ENCODE measurements at regions of chr22 and their contacts with region 1.

Region 1: DNA sequence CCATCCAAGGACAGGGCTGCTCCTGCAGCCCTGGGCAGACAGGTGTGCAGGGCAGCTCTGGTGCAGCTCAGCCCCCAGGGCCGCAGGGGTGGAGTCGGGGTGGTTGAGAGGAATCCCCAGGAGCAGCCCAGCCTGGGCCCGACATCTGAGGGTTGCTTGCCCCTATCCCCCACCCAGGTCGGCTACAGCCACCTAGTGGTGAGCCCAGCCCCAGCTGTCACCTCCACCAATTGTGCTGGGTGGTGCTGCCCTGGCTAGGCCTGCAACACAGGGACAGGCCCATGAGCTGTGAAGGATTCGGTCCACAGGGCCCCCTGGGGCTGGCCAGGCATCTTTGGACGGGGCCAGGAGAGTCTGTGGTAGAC is 29.6 kb downstream of the RTN4R start:
- DNase-seq: peak; percentile 82
- H3K4me3 Mint-ChIP-seq: no peak overlapping the region
- H3K27ac Mint-ChIP-seq: no peak overlapping the region
- H3K4me1 Mint-ChIP-seq: no peaks in the 10 kb centered on the region
- H3K27me3 Mint-ChIP-seq: peaks cover 39% of the 10 kb centered on the region
- CTCF ChIP-seq: no peak

Region 2: GRCh38 chr22:20156611-20157429 is 81.7 kb before region 1 on chr22:
- CTCF ChIA-PET with region 1: interaction called, 16 read pairs
- intact Hi-C with region 1: loop called (anchors 5 kb)
- DNase-seq: peak; percentile 90
- H3K4me3 Mint-ChIP-seq: no peak overlapping the region
- H3K27ac Mint-ChIP-seq: no peak overlapping the region
- H3K4me1 Mint-ChIP-seq: no peaks in the 10 kb centered on the region
- H3K27me3 Mint-ChIP-seq: peaks cover 64% of the 10 kb centered on the region
- CTCF ChIP-seq: peak; percentile 99

Region 3: DNA sequence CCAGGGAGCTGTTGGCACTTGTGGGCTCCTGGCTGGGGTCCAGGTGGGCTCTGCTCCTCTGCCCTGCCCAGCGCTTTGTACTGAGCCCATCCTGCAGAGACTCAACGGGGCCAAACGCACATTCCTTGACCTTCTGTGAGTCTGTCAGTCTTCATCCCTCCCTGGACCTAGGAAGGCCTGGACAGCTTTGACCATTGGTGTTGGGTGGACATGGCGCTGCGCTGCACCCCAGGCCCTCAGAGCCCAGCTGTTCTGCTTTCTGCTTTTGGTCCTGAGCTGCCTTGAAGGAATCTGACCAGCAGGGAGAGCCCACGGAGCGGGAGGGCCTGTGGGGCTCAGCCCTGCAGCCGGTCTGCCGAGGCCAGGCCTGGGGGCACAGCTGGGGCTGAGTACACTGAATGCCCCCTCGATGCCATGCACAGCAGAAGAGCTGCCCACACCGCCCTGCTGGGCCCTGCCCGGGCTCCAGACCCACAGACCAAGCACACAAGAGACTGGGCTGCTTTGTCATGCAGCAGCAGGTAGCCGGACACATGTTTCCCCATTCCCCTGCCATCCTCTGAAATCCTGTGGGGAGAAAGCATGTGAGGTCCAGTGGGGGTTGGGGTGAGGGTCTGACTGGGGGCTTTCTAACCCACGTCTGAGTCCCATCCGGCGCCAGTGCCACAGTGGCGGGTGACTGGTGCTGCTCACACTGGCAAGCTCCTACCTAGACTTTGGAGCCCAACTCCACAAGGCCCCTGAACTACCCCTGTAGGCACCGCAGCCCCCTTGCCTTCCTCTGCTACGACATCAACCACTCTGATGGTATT is 63.5 kb before region 1 on chr22:
- CTCF ChIA-PET with region 1: interaction called, 37 read pairs
- intact Hi-C with region 1: loop called (anchors 1 kb)
- DNase-seq: peak; percentile 55
- H3K4me3 Mint-ChIP-seq: no peak overlapping the region
- H3K27ac Mint-ChIP-seq: no peak overlapping the region
- H3K4me1 Mint-ChIP-seq: no peaks in the 10 kb centered on the region
- H3K27me3 Mint-ChIP-seq: peaks cover 75% of the 10 kb centered on the region
- CTCF ChIP-seq: peak; percentile 47

Region 4: DNA sequence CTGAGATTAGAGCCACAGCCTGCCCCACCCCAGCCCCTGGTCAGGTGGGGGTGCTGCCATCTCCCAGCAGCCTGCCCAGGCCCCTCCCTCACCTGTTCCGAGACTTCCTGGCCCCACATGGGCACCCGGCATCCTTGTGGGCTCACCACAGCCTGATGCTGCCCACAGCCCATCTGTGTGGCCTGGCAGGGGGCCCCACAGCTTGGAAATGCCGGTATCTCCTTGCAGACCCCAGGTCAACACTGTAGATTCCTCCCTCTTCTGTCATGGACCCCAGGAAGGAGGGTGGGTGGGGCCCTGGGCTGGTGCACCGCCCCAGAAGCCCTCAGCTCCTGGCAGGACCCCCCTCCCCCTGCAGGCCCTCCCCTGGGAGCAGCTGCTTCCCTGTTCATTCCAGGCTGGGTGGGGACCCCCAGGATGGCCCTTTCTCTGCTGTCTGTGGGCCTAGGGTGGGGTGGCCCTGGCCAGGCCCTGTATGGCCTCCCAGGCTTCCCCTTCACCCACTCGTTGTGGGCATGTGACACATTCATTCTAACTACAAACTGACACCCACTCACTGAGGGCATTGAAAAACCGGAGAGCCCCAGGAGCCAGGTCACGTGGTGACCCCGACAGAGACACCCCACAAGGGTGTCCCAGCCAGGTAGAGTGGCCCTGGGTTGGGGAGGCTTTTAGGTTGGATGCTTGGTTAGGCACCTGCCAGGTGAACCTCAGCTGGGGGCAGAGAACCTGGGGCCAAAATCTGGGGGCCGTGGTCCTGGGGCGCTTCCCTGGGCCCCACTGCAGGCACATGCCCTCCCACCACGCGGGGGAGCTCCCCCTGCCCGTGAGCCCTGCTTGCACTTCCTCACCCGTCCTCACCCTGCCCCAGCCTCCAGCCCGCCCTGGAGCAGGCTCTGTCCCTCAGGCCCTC is 43.6 kb before region 1 on chr22:
- CTCF ChIA-PET with region 1: no interaction called
- intact Hi-C with region 1: no loop called
- DNase-seq: no peak
- H3K4me3 Mint-ChIP-seq: no peak overlapping the region
- H3K27ac Mint-ChIP-seq: no peak overlapping the region
- H3K4me1 Mint-ChIP-seq: no peaks in the 10 kb centered on the region
- H3K27me3 Mint-ChIP-seq: peaks cover 18% of the 10 kb centered on the region
- CTCF ChIP-seq: no peak

Region 5: DNA sequence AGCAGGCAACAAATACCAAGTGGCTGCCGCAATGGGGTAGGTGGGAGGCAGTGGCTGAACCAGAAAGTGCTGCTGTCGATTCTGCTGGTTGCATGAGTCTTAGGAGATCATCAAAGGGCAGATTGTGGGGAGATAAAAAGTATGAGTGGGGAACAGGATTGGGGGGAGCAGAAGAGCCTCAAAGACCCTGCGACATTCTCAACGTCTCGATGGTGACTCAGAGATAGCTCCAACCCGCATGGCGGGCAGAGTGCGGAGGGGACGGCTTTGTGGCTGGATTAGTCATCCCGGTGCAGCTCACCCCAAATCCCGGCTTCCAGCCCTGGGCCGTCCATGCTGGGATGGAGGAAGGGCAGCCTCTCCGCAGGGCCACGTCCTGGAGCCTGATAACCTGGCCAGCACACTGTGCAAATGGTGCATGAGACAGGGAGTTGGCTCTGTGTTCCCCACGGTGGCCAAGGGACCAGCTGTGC is 41.2 kb after region 1 on chr22:
- CTCF ChIA-PET with region 1: no interaction called
- intact Hi-C with region 1: no loop called
- DNase-seq: peak; percentile 24
- H3K4me3 Mint-ChIP-seq: no peak overlapping the region
- H3K27ac Mint-ChIP-seq: no peak overlapping the region
- H3K4me1 Mint-ChIP-seq: peaks cover 9% of the 10 kb centered on the region
- H3K27me3 Mint-ChIP-seq: peaks cover 89% of the 10 kb centered on the region
- CTCF ChIP-seq: no peak

Region 6: GRCh38 chr22:20418211-20418788 is 179.8 kb after region 1 on chr22:
- CTCF ChIA-PET with region 1: interaction called, 10 read pairs
- intact Hi-C with region 1: no loop called
- DNase-seq: peak; percentile 72
- H3K4me3 Mint-ChIP-seq: peak overlapping the region; percentile 62
- H3K27ac Mint-ChIP-seq: no peak overlapping the region
- H3K4me1 Mint-ChIP-seq: peaks cover 2% of the 10 kb centered on the region
- H3K27me3 Mint-ChIP-seq: peaks cover 29% of the 10 kb centered on the region
- CTCF ChIP-seq: peak; percentile 87

Measured in Calu3 (cell line).